Gastrocnemius medialis (tissue), 4 donors: ENCODE measurements at regions of chr22 and their contacts with region 1.

Region 1: DNA sequence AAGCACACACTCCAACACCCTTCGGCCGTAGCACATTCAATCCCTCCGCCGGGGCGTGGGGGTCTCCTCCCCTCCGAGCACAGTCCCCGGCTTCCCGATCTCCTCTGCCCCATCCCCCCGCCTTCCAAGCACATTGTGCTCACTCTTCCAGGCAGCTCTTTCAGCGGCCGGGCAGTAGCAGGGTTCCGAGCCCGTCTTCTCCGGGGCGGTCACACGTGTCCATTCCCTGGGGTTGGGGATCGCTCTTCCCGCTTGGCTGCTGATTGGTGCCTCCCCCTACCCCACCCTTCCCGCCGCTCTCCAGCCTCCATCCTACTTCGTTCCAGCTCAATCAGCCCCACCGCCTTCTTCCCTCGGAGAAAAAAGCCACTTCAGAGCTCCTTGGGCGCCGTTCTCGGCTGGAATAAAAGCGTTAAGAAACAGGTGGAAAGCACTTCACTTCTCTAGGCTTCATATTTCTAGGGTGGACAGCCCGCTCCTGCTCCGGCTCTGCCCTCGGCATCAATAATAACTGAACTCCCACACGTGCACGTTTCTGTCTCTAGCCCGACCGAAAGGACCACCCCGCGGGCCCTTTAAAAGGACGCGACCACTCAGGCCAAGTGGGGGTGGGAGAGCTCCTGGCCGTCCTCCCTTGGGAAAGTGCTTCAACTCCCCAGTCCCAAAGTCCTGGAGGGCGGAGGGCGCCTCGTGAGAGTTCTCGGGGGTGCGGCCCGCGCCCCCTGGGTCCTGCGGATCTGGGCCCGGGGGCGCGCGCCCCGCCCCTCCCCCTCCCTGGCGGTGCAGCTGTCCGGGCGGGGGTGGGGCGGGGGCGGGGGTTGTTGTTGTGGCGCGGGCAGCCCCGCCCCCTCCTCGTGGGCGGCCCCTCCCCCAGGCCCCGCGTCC is 464 bp upstream of the CECR2 start:
- DNase-seq: peak; percentile 74 to 78
- ATAC-seq: peak; percentile 69 to 72
- H3K4me3 ChIP-seq: peak overlapping the region; percentile 71 to 93 (median 80)
- H3K27ac ChIP-seq: peak overlapping the region; percentile 91 to 99 (median 96)
- H3K4me1 ChIP-seq: peaks cover 34 to 38% of the 10 kb centered on the region in 2 donors
- H3K27me3 ChIP-seq: no peaks in the 10 kb centered on the region
- CTCF ChIP-seq: no peak
- POLR2A ChIP-seq: peak; percentile 50 to 55

Region 2: DNA sequence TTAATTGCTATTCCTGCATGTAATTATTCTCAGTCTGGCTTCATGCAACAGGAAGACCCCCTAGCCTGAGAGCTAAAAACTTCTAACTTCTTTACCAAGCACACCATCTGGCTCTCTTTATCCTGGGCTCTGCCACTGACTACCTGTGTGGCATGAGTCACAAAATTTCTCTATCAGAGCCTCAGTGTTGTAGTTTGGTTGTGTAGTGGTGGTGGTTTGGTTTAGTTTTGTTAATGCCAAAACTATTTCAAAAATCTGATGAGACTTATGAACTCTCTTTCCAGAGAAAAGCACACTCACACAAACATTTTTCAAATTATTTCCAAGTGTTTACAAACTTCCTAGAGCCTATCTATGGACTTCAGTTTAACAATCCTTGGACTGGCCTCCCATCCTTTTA is 291.5 kb before region 1 on chr22:
- in situ Hi-C with region 1: no loop called
- intact Hi-C with region 1: loop called (anchors 10 kb)
- DNase-seq: no peak
- ATAC-seq: no peak
- H3K4me3 ChIP-seq: no peak overlapping the region
- H3K27ac ChIP-seq: no peak overlapping the region
- H3K4me1 ChIP-seq: peaks cover 0 to 3% of the 10 kb centered on the region in 2 donors
- H3K27me3 ChIP-seq: no peaks in the 10 kb centered on the region
- CTCF ChIP-seq: no peak
- POLR2A ChIP-seq: no peak

Region 3: GRCh38 chr22:17087498-17088131 is 281.2 kb before region 1 on chr22:
- in situ Hi-C with region 1: no loop called
- intact Hi-C with region 1: no loop called
- DNase-seq: no peak
- ATAC-seq: no peak
- H3K4me3 ChIP-seq: no peak overlapping the region
- H3K27ac ChIP-seq: no peak overlapping the region
- H3K4me1 ChIP-seq: peaks cover 6 to 10% of the 10 kb centered on the region in 2 donors
- H3K27me3 ChIP-seq: peaks cover 10 to 23% (median 11%) of the 10 kb centered on the region in 3 donors
- CTCF ChIP-seq: no peak
- POLR2A ChIP-seq: no peak

Region 4: GRCh38 chr22:17213976-17214375 is 154.8 kb before region 1 on chr22:
- in situ Hi-C with region 1: no loop called
- intact Hi-C with region 1: loop called (anchors 5 kb)
- DNase-seq: peak; percentile 60 to 73
- ATAC-seq: peak; percentile 70 to 94
- H3K4me3 ChIP-seq: no peak overlapping the region
- H3K27ac ChIP-seq: no peak overlapping the region
- H3K4me1 ChIP-seq: no peaks in the 10 kb centered on the region
- H3K27me3 ChIP-seq: no peaks in the 10 kb centered on the region
- CTCF ChIP-seq: peak; percentile 36 to 58 (median 52)
- POLR2A ChIP-seq: no peak

Region 5: DNA sequence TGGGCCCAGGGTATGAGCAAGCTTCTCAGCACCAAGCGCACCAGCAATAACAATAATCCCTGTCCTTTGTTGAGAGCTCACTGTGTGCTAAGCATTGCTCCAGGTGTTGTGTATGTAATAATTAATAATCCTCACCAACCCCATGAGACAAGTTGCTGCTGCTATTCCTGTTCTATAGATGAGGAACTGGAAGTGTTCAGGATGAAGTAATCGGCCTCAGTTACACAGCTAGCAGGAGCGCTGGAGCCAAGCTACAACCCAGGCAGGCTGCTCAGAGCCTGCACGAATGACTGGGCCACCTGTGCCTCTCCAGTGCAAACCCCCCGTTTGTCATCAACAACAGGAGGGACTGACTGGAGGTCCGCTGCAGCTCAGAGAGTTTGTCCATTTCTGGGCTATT is 34.7 kb before region 1 on chr22:
- in situ Hi-C with region 1: no loop called
- intact Hi-C with region 1: no loop called
- DNase-seq: no peak
- ATAC-seq: no peak
- H3K4me3 ChIP-seq: no peak overlapping the region
- H3K27ac ChIP-seq: no peak overlapping the region
- H3K4me1 ChIP-seq: peaks cover 7 to 9% of the 10 kb centered on the region in 2 donors
- H3K27me3 ChIP-seq: no peaks in the 10 kb centered on the region
- CTCF ChIP-seq: no peak
- POLR2A ChIP-seq: no peak

Region 6: GRCh38 chr22:17436382-17436980 is 67.7 kb after region 1 on chr22:
- in situ Hi-C with region 1: no loop called
- intact Hi-C with region 1: loop called (anchors 1 kb)
- DNase-seq: peak in 1 of 2 donors; percentile 33
- ATAC-seq: peak; percentile 48 to 66
- H3K4me3 ChIP-seq: peak overlapping the region; percentile 9 to 29 (median 26)
- H3K27ac ChIP-seq: peak overlapping the region; percentile 86 to 93 (median 90)
- H3K4me1 ChIP-seq: peaks cover 69 to 90% of the 10 kb centered on the region in 2 donors
- H3K27me3 ChIP-seq: no peaks in the 10 kb centered on the region
- CTCF ChIP-seq: no peak
- POLR2A ChIP-seq: no peak

Region 7: GRCh38 chr22:17501679-17502285 is 133.0 kb after region 1 on chr22:
- in situ Hi-C with region 1: loop called in 3 of 4 experiments (anchors 5 to 10 kb)
- intact Hi-C with region 1: loop called (anchors 1 kb)
- DNase-seq: no peak
- ATAC-seq: peak; percentile 77 to 90
- H3K4me3 ChIP-seq: no peak overlapping the region
- H3K27ac ChIP-seq: peak overlapping the region; percentile 20 to 52 (median 32)
- H3K4me1 ChIP-seq: peaks cover 4 to 10% of the 10 kb centered on the region in 2 donors
- H3K27me3 ChIP-seq: no peaks in the 10 kb centered on the region
- CTCF ChIP-seq: peak; percentile 71 to 77 (median 74)
- POLR2A ChIP-seq: no peak

Region 8: GRCh38 chr22:18110194-18110953 is 741.6 kb after region 1 on chr22 and contains the start of gene TUBA8:
- in situ Hi-C with region 1: no loop called
- intact Hi-C with region 1: loop called (anchors 10 kb)
- DNase-seq: peak; percentile 71 to 84
- ATAC-seq: peak; percentile 65 to 71
- H3K4me3 ChIP-seq: peak within 1 kb of the TSS; percentile 60 to 71 (median 64)
- H3K27ac ChIP-seq: peak within 1 kb of the TSS; percentile 87 to 97 (median 94)
- H3K4me1 ChIP-seq: peaks cover 46 to 50% of the 10 kb centered on the region in 2 donors
- H3K27me3 ChIP-seq: no peaks in the 10 kb centered on the region
- CTCF ChIP-seq: peak in 1 of 5 experiments; percentile 23
- POLR2A ChIP-seq: peak; percentile 93 to 95
- total RNA-seq, gene TUBA8: 57.8 to 114 (median 77.7) TPM